ENCODE measurements at regions of chr11 and their contacts with region 1.

Region 1: DNA sequence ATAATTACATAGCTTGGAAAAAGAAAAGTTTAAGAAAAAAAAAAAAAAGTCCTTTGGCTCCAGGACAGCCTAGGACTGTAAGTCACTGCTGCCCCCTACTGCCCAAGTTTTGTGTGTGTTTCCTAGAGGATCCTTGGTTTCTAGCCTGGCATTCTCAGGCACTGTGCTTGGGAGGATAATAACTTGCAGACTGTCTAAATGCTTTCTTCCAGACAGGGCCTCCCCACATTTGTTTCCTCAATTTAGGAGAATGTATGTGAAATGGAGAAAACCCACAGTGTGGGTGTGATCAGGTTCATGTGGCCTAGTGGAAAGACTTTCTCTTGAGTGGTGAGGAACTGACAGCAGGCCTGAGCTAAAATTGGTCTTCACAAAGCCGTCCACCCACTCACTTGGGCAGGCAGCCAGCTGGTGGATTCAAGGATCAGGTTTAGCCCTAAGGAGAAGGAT is 191.0 kb downstream of the NAV2 start:
- DNase-seq: peak; percentile 76
- H3K4me3 Mint-ChIP-seq: no peak overlapping the region
- H3K27ac Mint-ChIP-seq: no peak overlapping the region
- H3K4me1 Mint-ChIP-seq: no peaks in the 10 kb centered on the region
- H3K27me3 Mint-ChIP-seq: no peaks in the 10 kb centered on the region

Region 2: DNA sequence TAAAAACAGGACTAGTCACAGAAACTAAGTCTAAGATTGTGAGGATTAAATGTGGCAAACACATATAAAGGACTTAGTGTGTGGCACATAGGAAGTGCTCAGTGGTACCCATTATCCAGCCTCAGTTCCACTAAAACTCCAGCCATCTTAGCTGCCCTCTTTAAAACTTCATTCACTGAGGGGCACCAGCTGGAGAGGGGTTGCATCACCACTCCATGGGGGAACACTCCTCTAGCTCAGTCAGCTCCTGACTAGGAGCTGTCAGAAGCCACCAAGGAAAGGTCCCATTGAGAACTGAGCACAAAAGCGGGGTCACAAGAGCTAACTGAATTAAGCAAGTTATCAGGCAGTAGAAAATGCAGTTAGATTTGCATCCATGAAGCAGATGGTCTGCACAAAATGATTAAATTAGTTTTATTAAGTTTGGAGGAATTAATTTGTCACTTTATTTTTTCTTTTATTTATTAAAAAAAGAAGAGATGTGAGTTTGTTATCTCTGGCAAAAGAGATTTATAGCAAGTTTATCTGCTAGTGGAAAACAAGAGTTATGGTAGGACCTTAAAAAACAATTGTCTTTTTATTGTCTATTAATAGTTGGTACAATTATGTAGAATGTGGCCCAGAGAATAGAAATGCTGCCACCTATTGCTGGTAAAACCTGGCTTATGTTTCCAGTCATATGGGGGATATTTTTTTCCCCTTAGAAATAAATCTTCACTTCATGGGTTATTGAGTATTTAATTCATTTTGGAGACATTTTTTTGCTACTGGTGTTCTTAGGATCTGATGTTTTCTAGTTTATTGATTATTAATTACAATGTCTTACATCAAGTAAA is 95.4 kb before region 1 on chr11:
- CTCF ChIA-PET with region 1: no interaction called
- intact Hi-C with region 1: loop called (anchors 5 kb)
- DNase-seq: no peak
- H3K4me3 Mint-ChIP-seq: no peak overlapping the region
- H3K27ac Mint-ChIP-seq: no peak overlapping the region
- H3K4me1 Mint-ChIP-seq: no peaks in the 10 kb centered on the region
- H3K27me3 Mint-ChIP-seq: peaks cover 2% of the 10 kb centered on the region

Region 3: DNA sequence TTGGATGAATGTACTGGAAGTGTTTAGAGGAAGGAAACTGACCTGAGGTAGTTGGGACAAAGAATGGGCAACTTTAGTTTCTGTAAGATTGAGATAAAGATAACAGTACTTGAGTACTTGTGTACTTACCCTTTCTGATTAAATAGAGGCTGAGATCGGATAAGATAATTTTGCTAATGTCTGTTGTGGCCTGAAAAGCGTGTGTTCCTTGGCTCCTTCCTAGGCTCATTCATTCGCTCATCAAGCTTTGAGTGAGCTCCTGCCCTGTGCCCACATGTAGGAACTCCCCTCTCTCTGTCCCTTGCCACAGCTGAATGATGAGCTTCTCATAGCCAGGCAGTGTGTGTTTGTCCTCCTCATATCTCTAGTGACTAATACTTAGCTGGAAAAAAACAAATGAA is 138.5 kb after region 1 on chr11:
- CTCF ChIA-PET with region 1: no interaction called
- intact Hi-C with region 1: no loop called
- DNase-seq: no peak
- H3K4me3 Mint-ChIP-seq: no peak overlapping the region
- H3K27ac Mint-ChIP-seq: no peak overlapping the region
- H3K4me1 Mint-ChIP-seq: no peaks in the 10 kb centered on the region
- H3K27me3 Mint-ChIP-seq: peaks cover 4% of the 10 kb centered on the region

Measured in activated naive CD4-positive, alpha-beta T cell treated with anti-CD3 and anti-CD28 coated beads for 36 hours (primary cell).